A673 (cell line): ENCODE measurements at regions of chr4 and their contacts with region 1.

Region 1: DNA sequence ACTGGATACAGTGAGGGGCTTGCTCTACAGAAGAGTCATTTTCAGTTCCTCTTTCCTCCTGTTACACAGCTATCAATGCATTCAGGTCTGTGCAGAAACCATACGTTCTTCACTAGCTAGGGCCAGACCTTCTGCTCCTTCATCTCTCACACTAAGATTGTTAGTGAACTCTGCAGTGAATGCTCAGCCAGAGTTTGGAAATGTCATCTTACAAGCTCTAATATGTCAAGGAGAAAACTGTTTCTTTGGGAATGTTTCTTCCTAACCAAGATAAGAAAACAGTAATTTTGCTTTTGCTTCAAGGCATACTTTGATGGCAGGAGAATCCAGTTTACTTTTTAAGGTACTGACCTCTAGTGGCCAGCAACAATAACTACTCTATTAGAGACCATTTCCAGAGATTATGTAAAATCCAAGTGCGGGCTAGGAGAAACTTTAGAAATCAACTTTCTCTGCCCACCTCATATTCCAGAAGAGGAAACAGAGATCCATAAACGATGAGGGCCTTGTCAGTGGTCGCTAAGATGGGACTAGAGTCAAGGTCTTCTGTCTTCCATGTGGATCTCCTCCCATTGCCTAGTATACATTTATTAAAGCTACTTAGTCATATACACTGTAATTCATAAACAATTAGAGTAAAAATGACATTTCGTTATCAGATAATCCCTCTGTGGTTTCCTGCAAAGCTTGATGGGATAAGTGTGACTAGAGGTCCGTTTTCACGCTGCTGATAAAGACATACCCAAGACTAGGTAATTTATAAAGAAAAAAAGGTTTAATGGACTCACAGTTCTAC is 12.1 kb upstream of the CC2D2A start:
- DNase-seq: peak; percentile 78
- H3K4me3 ChIP-seq: no peak overlapping the region
- H3K27ac ChIP-seq: no peak overlapping the region
- H3K4me1 ChIP-seq: peaks cover 32% of the 10 kb centered on the region
- H3K27me3 ChIP-seq: no peaks in the 10 kb centered on the region
- CTCF ChIP-seq: peak; percentile 79

Region 2: DNA sequence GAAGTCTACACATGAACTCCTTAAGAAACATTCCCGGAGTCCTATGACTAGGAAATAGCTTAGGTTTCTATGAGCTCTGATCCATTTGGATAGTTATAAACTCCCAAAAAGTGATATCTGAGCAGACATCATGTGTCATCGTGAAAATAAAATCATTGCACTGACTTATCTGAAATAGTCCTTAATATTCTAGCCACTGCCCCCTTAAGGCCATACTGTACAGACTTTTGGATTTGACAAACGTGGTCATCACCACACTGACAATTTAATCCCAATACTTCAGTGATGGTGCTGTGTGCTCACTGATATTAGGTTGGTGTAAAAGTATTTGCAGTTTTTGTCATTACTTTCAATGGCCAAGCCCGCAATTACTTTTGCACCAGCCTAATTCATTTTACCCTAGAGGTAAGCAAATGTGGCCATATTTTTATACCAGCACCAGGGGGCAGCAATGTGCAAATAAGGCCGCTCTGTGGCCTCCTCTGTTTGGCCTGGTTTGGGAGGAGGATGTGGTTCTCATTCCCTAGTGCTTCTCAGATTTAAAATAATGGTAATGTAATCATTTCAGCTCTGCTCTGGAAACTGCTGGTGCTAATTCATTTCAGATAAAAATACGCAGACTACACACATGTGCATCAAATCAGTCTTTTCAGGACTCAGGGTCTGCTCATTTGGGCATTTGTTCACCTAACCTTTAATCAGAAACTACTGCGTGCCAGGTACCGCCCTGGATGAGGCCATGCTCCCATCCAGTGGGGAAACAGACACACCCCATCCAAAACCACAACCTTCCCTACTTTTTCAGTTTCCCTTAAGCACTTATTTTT is 226.1 kb before region 1 on chr4:
- CTCF ChIA-PET with region 1: interaction called, 19 read pairs
- POLR2A ChIA-PET with region 1: no interaction called
- intact Hi-C with region 1: loop called (anchors 2 kb)
- DNase-seq: peak; percentile 91
- H3K4me3 ChIP-seq: no peak overlapping the region
- H3K27ac ChIP-seq: no peak overlapping the region
- H3K4me1 ChIP-seq: peaks cover 21% of the 10 kb centered on the region
- H3K27me3 ChIP-seq: no peaks in the 10 kb centered on the region
- CTCF ChIP-seq: peak; percentile 81

Region 3: GRCh38 chr4:15238720-15239119 is 218.9 kb before region 1 on chr4:
- CTCF ChIA-PET with region 1: interaction called, 19 read pairs
- POLR2A ChIA-PET with region 1: no interaction called
- intact Hi-C with region 1: loop called (anchors 1 kb)
- DNase-seq: peak; percentile 69
- H3K4me3 ChIP-seq: no peak overlapping the region
- H3K27ac ChIP-seq: no peak overlapping the region
- H3K4me1 ChIP-seq: peaks cover 32% of the 10 kb centered on the region
- H3K27me3 ChIP-seq: no peaks in the 10 kb centered on the region
- CTCF ChIP-seq: peak; percentile 82

Region 4: DNA sequence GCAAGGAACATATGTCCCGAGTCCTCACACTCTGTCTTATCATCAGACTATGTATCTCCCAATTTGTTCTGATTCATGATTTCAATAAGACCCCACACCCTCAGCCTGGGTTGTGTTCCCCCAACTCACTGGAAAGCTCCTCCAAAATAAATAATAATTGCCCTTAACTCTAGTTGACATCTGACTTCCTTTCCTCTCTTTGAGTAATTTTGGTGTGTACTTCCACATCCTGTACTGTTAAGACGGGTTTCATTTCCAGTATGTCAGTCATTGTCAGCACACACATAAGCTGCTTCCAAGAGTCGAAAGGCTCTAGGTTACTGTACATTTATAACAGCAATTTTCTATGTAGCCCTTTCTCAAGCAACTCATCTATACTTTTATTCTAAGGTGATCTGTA is 81.9 kb before region 1 on chr4:
- CTCF ChIA-PET with region 1: no interaction called
- POLR2A ChIA-PET with region 1: no interaction called
- intact Hi-C with region 1: loop called (anchors 5 kb)
- DNase-seq: no peak
- H3K4me3 ChIP-seq: no peak overlapping the region
- H3K27ac ChIP-seq: no peak overlapping the region
- H3K4me1 ChIP-seq: peaks cover 24% of the 10 kb centered on the region
- H3K27me3 ChIP-seq: no peaks in the 10 kb centered on the region
- CTCF ChIP-seq: no peak

Region 5: DNA sequence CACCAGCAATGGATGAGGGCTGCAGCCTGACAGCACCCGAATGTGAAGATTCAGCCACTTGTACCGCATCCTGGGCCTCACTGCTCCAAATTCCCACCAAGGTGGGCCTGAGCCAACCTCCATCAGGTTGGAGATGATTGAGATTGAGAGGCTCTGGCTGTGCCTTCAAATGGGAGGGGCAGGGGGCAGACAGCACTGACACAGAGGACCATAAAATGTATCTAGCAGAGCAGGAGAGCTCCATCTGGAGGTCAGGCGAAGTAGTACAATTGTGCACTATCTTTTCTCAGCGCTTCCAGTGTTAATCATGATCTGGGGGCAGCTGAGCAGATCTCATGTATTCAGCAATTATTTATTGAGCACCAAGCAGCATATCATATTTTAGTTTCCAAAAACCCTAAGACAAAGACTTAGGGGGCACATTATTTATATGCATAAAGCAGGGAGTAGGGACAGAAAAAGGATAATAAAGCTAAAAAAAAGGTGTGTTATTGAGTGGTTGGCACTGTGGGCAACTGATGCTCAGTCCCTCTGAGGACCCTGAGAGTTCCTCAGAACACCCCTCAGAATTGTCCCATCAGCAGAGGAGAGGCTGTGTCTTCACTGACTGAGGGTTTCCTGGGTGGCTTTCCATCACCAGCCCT is 61.3 kb before region 1 on chr4:
- CTCF ChIA-PET with region 1: no interaction called
- POLR2A ChIA-PET with region 1: no interaction called
- intact Hi-C with region 1: loop called (anchors 5 kb)
- DNase-seq: peak; percentile 72
- H3K4me3 ChIP-seq: no peak overlapping the region
- H3K27ac ChIP-seq: no peak overlapping the region
- H3K4me1 ChIP-seq: peaks cover 25% of the 10 kb centered on the region
- H3K27me3 ChIP-seq: no peaks in the 10 kb centered on the region
- CTCF ChIP-seq: peak; percentile 85